Aorta (tissue), 5 donors: ENCODE measurements at regions of chr5 and their contacts with region 1.

Region 1: GRCh38 chr5:76404223-76405211 is 1.4 kb downstream of the IQGAP2 start:
- DNase-seq: peak in 1 of 2 donors; percentile 75
- ATAC-seq: no peak
- H3K4me3 ChIP-seq: no peak overlapping the region
- H3K27ac ChIP-seq: no peak overlapping the region
- H3K4me1 ChIP-seq: no peaks in the 10 kb centered on the region
- H3K27me3 ChIP-seq: no peaks in the 10 kb centered on the region

Region 2: DNA sequence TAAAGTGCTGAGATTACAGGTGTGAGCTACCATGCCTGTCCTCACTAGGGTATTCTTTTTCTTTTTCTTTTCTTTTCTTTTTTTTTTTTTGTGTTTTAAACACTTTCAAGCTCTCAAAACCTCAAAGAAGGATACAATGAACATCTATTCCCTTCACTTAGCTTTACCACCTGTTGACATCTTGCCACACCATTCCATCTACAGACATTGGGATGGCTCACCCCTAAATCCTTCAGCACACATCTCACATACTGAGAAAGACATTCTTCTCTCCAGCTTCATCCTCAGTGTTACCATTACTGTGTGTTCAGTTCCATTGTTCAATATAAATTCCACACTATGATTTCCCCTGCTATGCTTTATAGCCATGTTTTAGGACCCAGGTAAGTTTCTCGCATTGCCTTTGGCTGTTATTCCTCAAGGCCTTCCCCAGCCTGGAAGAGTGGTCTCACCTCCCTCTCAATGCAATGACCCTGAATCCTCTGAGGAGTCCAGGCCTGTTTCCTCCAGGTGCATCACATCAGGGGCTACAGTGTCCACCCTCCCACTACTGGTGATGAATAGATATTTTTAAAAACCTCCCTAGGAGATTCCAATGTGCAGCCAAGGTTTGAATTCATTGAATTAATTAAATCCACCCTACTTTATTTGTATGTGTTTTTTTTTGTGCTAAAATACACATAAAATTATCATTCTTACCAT is 15.2 kb after region 1 on chr5:
- intact Hi-C with region 1: loop called in 1 of 2 experiments (anchors 1 kb)
- DNase-seq: no peak
- ATAC-seq: no peak
- H3K4me3 ChIP-seq: no peak overlapping the region
- H3K27ac ChIP-seq: no peak overlapping the region
- H3K4me1 ChIP-seq: no peaks in the 10 kb centered on the region
- H3K27me3 ChIP-seq: no peaks in the 10 kb centered on the region